GM10248 (cell line): ENCODE measurements at regions of chr11 and their contacts with region 1.

Region 1: DNA sequence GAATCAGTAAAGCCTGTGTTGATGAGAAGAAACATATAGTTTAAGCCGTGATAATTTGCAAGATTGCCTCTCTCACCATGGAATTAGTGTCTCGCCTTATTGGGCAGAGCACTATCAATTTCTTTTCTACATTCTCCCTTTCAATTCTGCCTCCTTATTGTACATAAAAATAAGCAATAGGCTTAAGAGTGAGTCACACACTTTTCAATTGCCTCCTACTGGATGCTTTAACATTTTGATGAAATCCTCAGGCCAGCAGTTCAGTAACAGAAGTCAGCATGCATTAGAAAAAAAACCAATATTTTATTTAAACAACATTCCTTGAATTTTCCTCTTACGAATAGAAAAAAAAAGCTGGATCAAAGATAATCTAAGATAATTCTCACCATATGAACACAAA is 33.8 kb upstream of the VWA5A start:
- DNase-seq: no peak
- CTCF ChIP-seq: no peak

Region 2: GRCh38 chr11:124070915-124071635 is 10.4 kb before region 1 on chr11:
- CTCF ChIA-PET with region 1: interaction called, 18 read pairs
- POLR2A ChIA-PET with region 1: no interaction called
- DNase-seq: peak; percentile 67
- CTCF ChIP-seq: peak; percentile 70